HEK293T (cell line): ENCODE measurements at regions of chr11 and their contacts with region 1.

Region 1: DNA sequence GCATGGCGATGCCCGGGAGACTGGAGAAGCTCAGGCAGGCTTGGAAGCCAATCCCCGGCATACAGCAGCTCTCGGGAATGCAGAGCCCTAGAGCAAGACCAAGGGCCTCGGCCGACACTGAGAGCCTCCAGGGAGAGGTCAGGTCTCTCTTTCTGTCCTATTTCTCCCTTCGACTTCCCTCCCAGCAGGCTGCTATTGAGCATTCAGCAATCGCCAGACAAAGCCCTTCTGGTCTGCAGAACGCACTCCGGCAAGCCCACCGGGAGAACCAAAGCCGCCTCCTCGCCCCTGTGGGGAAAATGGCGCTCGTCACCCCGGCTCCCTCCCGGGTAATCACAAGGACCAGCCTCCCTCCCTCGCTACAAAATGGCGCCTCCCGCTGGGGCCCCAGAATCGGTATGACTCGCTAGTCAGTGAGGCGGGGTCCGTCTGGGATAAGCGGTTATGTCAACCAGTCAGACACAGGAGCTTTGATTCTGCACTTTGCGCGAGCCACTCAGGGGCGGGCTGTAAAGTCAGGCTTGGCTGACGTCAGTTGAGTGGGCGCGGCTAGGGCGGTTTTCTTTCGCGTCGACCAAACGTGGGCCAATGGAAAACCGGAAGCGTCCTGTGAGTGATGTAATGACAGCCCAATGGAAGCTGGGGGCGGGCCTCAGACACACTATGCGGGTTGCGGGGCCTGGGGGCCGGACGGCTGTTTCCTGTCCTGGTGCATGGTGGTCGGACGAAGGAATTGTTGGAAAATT is at the start of gene ZNF143:
- DNase-seq: peak; percentile 91

Region 2: DNA sequence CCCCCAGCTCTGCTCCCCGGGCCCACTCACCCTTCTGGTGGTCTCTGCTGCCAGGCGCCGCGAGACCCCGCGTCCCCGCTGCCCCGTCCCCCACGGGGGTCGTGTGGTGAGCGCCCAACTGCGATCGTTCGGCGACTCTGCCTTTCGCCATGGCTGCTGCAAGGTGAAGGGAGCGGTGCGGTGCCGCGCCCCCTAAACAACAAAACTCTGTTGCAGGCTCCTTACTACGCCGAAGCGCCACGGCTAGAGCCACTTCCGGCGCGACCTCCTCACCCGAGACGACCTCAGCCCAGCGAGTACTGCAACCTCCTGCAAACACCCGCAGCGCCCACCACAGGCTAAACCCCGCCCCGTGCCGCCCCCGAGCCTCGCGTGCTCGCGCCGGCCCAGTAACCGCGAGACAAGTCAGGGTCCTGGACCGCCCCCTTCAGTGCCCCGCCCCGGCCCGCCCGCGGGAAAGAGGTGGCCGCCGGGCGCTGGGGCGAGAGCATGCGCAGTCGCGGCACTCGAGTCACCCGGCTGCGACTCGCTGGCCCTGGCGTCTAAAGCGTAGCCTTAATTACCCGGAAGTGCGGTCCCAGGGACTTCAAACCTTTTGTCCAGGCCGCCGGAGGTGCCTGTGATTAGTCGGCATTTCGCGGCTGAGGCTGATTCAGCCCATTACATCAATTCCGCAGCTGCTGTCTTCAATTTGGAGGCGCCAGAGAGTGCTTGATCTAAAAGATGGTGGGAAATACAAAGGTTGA is 146.0 kb before region 1 on chr11 and contains the start of gene TMEM41B:
- CTCF ChIA-PET with region 1: no interaction called
- POLR2A ChIA-PET with region 1: interaction called, 14 read pairs
- DNase-seq: peak; percentile 99

Region 3: DNA sequence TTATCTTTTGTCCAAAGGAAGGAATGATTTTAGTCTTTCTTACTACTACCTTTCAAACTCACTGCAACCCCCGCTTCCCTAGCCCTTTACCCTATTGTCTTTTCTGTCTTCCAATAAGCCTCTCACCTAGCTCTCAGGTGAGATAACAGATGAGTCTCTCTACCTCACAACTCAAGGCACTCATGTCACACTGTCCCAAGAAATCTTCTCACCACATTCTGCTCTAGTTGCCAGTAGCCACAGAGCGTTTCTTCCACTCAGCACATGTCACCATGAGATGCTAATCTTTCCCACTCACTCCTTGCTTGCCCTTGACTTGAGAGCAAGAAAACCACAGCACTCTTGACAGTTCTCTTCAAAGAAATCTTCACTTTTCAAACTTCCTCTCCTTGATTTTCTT is 113.4 kb before region 1 on chr11:
- CTCF ChIA-PET with region 1: no interaction called
- POLR2A ChIA-PET with region 1: no interaction called
- DNase-seq: no peak

Region 4: GRCh38 chr11:9384535-9385303 is 75.8 kb before region 1 on chr11 and contains the start of gene IPO7:
- CTCF ChIA-PET with region 1: interaction called, 3 read pairs
- POLR2A ChIA-PET with region 1: interaction called, 25 read pairs
- DNase-seq: peak; percentile 88

Region 5: GRCh38 chr11:9479899-9480298 is 19.4 kb after region 1 on chr11:
- CTCF ChIA-PET with region 1: interaction called, 4 read pairs
- POLR2A ChIA-PET with region 1: interaction called, 44 read pairs
- DNase-seq: no peak

Region 6: GRCh38 chr11:9506489-9507276 is 46.2 kb after region 1 on chr11:
- CTCF ChIA-PET with region 1: interaction called, 5 read pairs
- POLR2A ChIA-PET with region 1: interaction called, 33 read pairs
- DNase-seq: peak; percentile 74